AG04449 (cell line): ENCODE measurements at regions of chr6 and their contacts with region 1.

Region 1: DNA sequence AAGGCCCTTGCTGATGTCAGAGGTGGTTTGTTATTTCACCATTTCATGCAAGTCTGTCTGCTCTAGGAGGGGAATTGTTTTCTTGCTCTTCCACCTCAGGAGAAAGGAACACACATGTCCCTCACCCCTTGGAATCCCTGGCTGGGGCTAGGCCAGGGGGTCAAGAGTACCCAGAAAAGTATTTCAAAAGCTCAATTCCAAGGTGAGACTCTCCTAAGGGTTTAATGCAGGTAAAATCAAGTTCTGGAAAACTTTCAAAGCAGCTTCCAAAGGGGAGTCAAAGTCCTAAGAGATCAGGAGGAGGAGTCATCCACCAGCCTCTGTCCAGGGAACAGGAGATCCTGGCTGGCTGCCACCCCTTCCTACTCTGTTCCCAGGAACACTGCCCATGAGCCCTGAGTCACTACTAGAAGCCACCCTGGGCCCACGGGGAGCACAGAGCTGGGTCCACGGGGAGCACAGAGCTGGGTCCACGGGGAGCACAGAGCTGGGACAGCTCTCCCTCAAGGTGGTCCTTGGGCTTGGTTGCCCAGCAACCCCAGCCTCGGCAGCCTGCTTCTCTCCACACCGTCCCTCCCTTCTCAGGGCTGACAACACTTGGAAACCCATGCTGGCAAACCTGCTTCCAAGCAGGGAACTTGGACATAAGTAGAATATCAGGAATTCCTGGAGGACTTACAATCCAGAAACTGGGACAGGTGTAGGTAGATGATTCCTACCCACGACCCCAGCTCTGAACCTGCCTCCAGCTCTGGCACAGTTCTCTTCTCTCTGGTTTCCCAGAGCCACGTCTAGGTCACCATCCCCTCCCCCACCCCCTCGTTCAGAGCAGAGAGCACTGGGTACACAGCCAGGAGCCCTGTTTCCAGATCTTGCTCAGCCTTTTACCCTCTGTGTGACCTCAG is 35.3 kb upstream of the CDKN1A start:
- DNase-seq: no peak
- H3K4me3 ChIP-seq: no peak overlapping the region
- CTCF ChIP-seq: no peak

Region 2: DNA sequence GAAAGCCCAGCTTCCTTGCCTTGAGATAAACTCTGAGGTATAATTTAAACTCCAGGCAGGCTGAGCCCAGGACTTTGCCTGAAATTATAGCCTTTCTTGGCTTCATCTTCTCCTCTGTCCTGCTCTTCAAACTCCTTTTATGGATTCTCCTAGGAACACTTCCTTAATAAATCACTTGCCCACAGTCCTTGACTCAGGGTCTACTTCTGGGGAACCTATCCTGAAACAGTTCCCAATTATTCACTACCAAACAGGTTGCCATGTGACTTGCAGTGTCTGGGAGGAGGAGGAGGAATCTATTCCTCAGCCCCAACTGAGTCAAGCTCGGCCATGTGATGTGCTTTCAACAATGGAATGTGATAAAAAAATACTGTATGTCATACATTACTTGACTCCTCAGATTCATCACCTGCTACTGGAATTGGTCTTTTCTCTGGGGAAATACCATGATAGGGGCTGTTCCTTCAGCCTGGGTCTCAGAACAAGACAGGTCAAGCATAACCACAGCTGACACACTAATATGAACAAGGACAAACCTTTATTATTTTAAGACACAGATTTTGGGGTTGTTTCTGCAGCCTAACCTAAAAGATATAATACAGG is 14.9 kb after region 1 on chr6:
- CTCF ChIA-PET with region 1: interaction called, 14 read pairs
- POLR2A ChIA-PET with region 1: no interaction called
- DNase-seq: no peak
- H3K4me3 ChIP-seq: no peak overlapping the region
- CTCF ChIP-seq: no peak

Region 3: GRCh38 chr6:36929607-36930006 is 286.4 kb after region 1 on chr6:
- CTCF ChIA-PET with region 1: no interaction called
- POLR2A ChIA-PET with region 1: no interaction called
- DNase-seq: no peak
- H3K4me3 ChIP-seq: no peak overlapping the region
- CTCF ChIP-seq: no peak